Activated T-helper 1 cell treated with anti-CD3 and anti-CD28 coated beads, Interleukin-12 subunit alpha, Interleukin-12 subunit beta, Interleukin-2, Interleukin-4 antibody, amounts not matched to agents 30 ng/mL and 10 ng/mL and 1 ng/mL, durations not matched to agents 14 hours and 24 hours and 36 hours (primary cell): ENCODE measurements at regions of chr2 and their contacts with region 1.

Region 1: DNA sequence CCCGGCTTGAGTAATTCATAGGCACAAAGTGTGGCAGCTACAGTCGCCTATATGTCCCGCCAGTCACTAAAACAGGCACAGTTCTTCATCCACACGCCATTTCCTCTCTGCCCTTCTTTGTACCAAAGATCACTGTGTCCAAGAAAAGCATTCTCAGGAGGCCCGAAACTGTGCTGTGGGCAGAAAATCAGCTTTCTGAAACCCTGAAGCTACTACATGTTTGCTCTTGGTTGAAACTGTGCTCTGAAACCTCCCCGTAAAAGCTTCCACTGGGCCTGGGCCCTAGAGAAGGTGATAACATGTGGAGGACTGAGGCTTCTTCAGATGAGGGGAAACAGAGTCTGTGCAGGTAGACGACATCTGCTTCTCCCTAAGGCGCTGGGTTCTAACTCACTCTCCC is 75.6 kb upstream of the ID2 start:
- DNase-seq: no peak
- H3K4me3 Mint-ChIP-seq: no peak overlapping the region
- H3K27ac Mint-ChIP-seq: no peak overlapping the region
- H3K4me1 Mint-ChIP-seq: peaks cover 44% of the 10 kb centered on the region
- H3K27me3 Mint-ChIP-seq: peaks cover 1% of the 10 kb centered on the region

Region 2: GRCh38 chr2:8567479-8568260 is 38.6 kb before region 1 on chr2:
- intact Hi-C with region 1: no loop called
- DNase-seq: no peak
- H3K4me3 Mint-ChIP-seq: no peak overlapping the region
- H3K27ac Mint-ChIP-seq: no peak overlapping the region
- H3K4me1 Mint-ChIP-seq: no peaks in the 10 kb centered on the region
- H3K27me3 Mint-ChIP-seq: peaks cover 6% of the 10 kb centered on the region

Region 3: DNA sequence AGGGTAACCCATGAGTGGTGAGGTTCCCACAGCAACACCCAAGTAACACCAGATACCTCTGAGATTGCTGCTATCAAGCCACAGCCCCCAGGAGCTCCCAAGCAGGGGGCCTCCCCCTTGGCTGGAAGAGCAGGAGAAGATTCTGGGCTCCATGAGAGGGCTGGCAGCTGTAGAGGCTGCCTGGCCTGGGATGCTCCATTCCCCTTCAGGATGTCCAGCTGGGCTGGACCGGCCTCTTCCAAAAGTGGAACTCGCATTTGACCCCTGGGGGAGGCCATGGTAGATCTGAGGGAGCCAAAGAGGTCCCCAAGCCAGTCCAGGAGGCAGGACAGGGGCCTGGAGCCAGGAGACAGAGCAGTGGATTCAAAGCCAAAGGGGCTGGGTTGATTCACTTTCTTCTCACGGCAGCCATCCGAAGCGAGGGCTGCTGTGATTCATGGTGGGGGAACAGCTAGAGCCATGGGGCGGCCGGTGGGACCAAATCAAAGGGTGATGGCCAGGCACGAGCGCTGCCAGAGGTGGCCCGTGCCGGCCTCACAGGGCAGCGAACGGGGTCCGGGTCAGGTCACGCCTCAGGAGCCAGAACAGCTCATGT is 19.7 kb before region 1 on chr2:
- intact Hi-C with region 1: loop called (anchors 2 kb)
- DNase-seq: no peak
- H3K4me3 Mint-ChIP-seq: peak overlapping the region; percentile 5
- H3K27ac Mint-ChIP-seq: no peak overlapping the region
- H3K4me1 Mint-ChIP-seq: peaks cover 48% of the 10 kb centered on the region
- H3K27me3 Mint-ChIP-seq: peaks cover 5% of the 10 kb centered on the region

Region 4: DNA sequence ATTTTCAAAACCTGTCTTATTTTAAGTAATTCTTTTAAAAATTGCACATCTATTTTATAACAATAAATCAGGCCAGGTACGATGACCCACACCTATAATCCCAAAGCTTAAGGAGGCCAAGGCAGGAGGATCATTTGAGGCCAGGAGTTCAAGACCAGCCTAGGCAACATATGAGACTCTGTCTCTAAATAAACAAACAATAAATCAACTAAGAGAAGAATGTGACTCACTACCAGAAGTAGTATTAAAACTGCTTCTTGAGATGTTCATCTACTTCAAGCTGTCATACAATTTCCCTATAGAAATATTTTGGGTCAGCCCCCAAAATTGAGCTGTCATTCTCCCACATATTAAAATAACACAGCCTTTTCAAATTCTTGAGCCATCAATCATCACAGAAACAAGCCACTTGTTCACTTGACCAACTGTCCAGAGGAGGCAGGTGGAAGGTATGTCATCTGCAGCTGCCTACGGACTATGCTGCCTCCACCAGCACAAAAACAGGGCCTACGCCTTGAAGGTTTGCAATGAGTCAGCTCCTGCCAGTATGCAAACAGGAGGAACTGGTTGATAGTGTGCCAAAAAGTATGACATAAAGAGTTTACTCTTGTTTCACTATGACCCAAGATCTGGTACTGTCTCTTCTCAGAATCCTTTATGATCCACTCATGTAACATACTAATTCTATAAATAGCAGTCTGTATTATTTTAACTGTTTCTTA is 197.6 kb after region 1 on chr2:
- intact Hi-C with region 1: loop called (anchors 5 kb)
- DNase-seq: peak; percentile 47
- H3K4me3 Mint-ChIP-seq: no peak overlapping the region
- H3K27ac Mint-ChIP-seq: peak overlapping the region; percentile 83
- H3K4me1 Mint-ChIP-seq: peaks cover 28% of the 10 kb centered on the region
- H3K27me3 Mint-ChIP-seq: no peaks in the 10 kb centered on the region

Region 5: GRCh38 chr2:9112079-9112721 is 506.0 kb after region 1 on chr2:
- intact Hi-C with region 1: no loop called
- DNase-seq: no peak
- H3K4me3 Mint-ChIP-seq: no peak overlapping the region
- H3K27ac Mint-ChIP-seq: no peak overlapping the region
- H3K4me1 Mint-ChIP-seq: no peaks in the 10 kb centered on the region
- H3K27me3 Mint-ChIP-seq: peaks cover 2% of the 10 kb centered on the region